ENCODE measurements at regions of chr19 and their contacts with region 1.

Region 1: GRCh38 chr19:3154957-3155736 is 19.3 kb downstream of the GNA15 start:
- DNase-seq: peak; percentile 100
- H3K4me3 Mint-ChIP-seq: no peak overlapping the region
- H3K27ac Mint-ChIP-seq: no peak overlapping the region
- H3K4me1 Mint-ChIP-seq: peaks cover 6% of the 10 kb centered on the region
- H3K27me3 Mint-ChIP-seq: no peaks in the 10 kb centered on the region
- CTCF ChIP-seq: no peak

Region 2: DNA sequence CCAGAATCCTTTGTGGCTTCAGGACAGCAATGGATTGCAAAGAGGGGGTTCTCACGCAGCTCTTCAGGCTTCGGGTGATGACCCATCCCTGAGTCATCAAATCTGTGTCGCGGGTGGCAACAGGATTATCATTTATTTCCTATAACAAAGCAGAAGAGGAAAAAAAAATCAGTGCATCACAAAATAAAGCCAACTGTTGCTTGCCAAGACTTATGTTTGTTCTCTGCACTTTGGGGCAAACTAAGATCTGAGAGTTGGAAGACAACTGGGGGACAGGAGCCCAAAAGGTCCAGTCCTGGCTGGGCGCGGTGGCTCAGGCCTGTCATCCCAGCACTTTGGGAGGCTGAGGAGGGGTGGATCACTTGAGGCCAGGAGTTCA is 12.9 kb before region 1 on chr19:
- CTCF ChIA-PET with region 1: interaction called, 10 read pairs
- POLR2A ChIA-PET with region 1: interaction called, 10 read pairs
- intact Hi-C with region 1: no loop called
- DNase-seq: peak; percentile 93
- H3K4me3 Mint-ChIP-seq: peak overlapping the region; percentile 63
- H3K27ac Mint-ChIP-seq: peak overlapping the region; percentile 97
- H3K4me1 Mint-ChIP-seq: peaks cover 21% of the 10 kb centered on the region
- H3K27me3 Mint-ChIP-seq: no peaks in the 10 kb centered on the region
- CTCF ChIP-seq: no peak

Region 3: GRCh38 chr19:3185482-3186376 is 30.6 kb after region 1 on chr19 and contains the start of gene NCLN:
- CTCF ChIA-PET with region 1: no interaction called
- POLR2A ChIA-PET with region 1: interaction called, 3 read pairs
- intact Hi-C with region 1: loop called (anchors 2 kb)
- DNase-seq: peak; percentile 97
- H3K4me3 Mint-ChIP-seq: peak within 1 kb of the TSS; percentile 93
- H3K27ac Mint-ChIP-seq: peak within 1 kb of the TSS; percentile 97
- H3K4me1 Mint-ChIP-seq: peaks cover 24% of the 10 kb centered on the region
- H3K27me3 Mint-ChIP-seq: no peaks in the 10 kb centered on the region
- CTCF ChIP-seq: no peak
- total RNA-seq, gene NCLN: 72.1 and 84.1 TPM in 2 replicates

Measured in MCF 10A (cell line).